ENCODE measurements at regions of chr3 and their contacts with region 1.

Region 1: DNA sequence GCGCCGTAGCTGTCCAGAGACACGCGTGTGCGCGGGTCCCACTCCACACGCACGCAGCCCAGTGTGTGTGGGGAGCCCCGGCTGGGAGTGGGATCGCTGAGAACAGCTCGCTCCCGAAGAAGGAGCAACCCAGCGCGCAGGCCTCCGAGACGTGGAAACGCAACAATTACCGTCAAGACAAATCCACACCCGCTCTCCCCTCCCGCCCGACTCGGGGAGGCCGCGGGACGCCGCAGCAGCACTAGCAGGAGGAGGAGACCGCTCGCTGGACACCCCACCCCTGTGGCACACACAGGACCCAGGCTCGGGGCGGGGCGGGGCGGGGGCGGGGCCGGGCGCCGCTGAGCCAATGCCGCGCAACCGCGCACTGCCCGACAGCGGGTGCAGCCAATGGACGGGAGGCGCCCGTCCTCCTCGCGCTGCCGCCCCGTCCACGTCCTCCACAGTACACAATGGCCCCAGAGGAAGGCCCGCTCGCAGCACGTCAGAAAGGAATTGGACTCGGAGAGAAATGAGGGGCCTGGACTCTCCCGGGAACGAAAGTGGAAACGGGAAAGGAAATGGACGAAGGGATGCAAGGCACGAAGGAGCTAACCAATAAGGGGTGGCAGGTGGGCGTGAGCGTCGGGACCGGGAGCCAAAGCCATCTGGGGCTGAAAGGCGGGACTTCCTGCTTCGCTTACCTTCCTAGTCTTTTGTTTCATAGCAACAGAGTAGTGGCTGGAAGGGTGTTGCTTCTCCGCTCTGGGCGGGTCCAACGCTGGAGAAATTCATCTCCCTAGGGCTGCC is at the start of gene CBLB:
- DNase-seq: peak; percentile 97
- ATAC-seq: peak; percentile 96
- H3K4me3 ChIP-seq: peak within 1 kb of the TSS; percentile 78
- H3K27ac ChIP-seq: peak within 1 kb of the TSS; percentile 92
- H3K4me1 ChIP-seq: peaks cover 2% of the 10 kb centered on the region; the same call in 1 of the 2 replicates
- H3K27me3 ChIP-seq: no peaks in the 10 kb centered on the region
- CTCF ChIP-seq: no peak
- POLR2A ChIP-seq: peak; percentile 84
- RAD21 ChIP-seq: no peak; the same call in 1 of the 2 replicates
- total RNA-seq, gene CBLB: 20.1 and 28.6 TPM in 2 replicates

Region 2: GRCh38 chr3:105686278-105686897 is 182.5 kb before region 1 on chr3:
- CTCF ChIA-PET with region 1: no interaction called
- POLR2A ChIA-PET with region 1: interaction called, 5 read pairs
- dilution Hi-C with region 1: no loop called
- in situ Hi-C with region 1: no loop called
- intact Hi-C with region 1: loop called (anchors 2 kb)
- DNase-seq: peak; percentile 54
- ATAC-seq: peak; percentile 60; the same call in 1 of the 2 replicates
- H3K4me3 ChIP-seq: no peak overlapping the region
- H3K27ac ChIP-seq: no peak overlapping the region
- H3K4me1 ChIP-seq: peaks cover 2% of the 10 kb centered on the region; the same call in 1 of the 2 replicates
- H3K27me3 ChIP-seq: no peaks in the 10 kb centered on the region
- CTCF ChIP-seq: peak; percentile 83
- POLR2A ChIP-seq: no peak
- RAD21 ChIP-seq: peak; percentile 87

Region 3: DNA sequence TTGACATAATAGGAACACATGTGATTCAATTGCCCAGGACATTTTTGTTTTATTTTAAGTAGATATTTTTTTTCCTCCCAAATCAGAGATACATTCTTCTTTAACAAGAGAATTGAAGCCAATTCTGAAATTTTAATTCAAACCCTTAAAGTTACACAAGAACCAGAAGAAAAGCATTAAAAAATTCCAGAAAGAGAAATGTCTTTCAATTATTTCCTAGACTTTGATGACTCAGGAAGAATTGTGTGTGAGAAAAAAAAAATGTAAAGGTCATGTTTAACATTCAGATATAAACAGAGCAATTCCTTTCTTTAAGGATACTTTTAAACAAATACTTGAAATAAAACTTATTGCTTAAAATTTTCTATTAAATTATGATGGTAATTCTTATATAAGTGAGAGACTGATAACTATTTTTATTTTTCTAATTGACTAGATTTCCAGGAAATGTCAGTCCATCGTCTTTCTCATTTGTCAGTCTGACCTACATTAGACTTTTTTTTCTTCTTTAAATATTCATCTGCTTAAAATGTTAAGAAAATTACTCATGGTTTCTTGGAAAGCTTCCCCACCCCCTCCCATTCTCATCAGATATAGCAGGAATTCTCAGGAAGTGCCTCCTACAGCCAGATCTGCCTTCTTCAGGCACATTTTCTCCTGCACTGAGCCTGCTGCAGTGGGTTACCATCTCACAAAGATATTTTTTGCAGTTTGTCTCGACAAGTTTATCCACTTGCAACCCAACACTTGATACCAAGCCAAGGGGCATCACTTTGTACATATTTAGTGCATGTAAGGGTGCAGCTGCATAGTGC is 261.7 kb after region 1 on chr3:
- CTCF ChIA-PET with region 1: interaction called, 3 read pairs
- POLR2A ChIA-PET with region 1: no interaction called
- dilution Hi-C with region 1: no loop called
- in situ Hi-C with region 1: no loop called
- intact Hi-C with region 1: loop called (anchors 5 kb)
- DNase-seq: peak; percentile 87
- ATAC-seq: peak; percentile 85
- H3K4me3 ChIP-seq: no peak overlapping the region
- H3K27ac ChIP-seq: peak overlapping the region; percentile 56; the same call in 1 of the 2 replicates
- H3K4me1 ChIP-seq: peaks cover 7% of the 10 kb centered on the region; the same call in 1 of the 2 replicates
- H3K27me3 ChIP-seq: no peaks in the 10 kb centered on the region
- CTCF ChIP-seq: no peak
- POLR2A ChIP-seq: no peak
- RAD21 ChIP-seq: no peak

Region 4: GRCh38 chr3:106345353-106346027 is 476.6 kb after region 1 on chr3:
- CTCF ChIA-PET with region 1: no interaction called
- POLR2A ChIA-PET with region 1: no interaction called
- dilution Hi-C with region 1: no loop called
- in situ Hi-C with region 1: no loop called
- intact Hi-C with region 1: loop called (anchors 5 kb)
- DNase-seq: peak; percentile 93
- ATAC-seq: peak; percentile 95
- H3K4me3 ChIP-seq: no peak overlapping the region
- H3K27ac ChIP-seq: peak overlapping the region; percentile 5; the same call in 1 of the 2 replicates
- H3K4me1 ChIP-seq: peaks cover 2% of the 10 kb centered on the region; the same call in 1 of the 2 replicates
- H3K27me3 ChIP-seq: no peaks in the 10 kb centered on the region
- CTCF ChIP-seq: no peak; the same call in 1 of the 2 replicates
- POLR2A ChIP-seq: no peak
- RAD21 ChIP-seq: no peak